ENCODE measurements at regions of chr17 and their contacts with region 1.

Region 1: GRCh38 chr17:82767041-82767754 is 15.3 kb downstream of the TBCD start:
- DNase-seq: peak; percentile 80
- H3K4me3 Mint-ChIP-seq: no peak overlapping the region
- H3K27ac Mint-ChIP-seq: no peak overlapping the region
- H3K4me1 Mint-ChIP-seq: peaks cover 15% of the 10 kb centered on the region
- H3K27me3 Mint-ChIP-seq: no peaks in the 10 kb centered on the region

Region 2: GRCh38 chr17:82636626-82637598 is 130.3 kb before region 1 on chr17:
- intact Hi-C with region 1: no loop called
- DNase-seq: no peak
- H3K4me3 Mint-ChIP-seq: no peak overlapping the region
- H3K27ac Mint-ChIP-seq: peak overlapping the region; percentile 22
- H3K4me1 Mint-ChIP-seq: peaks cover 17% of the 10 kb centered on the region
- H3K27me3 Mint-ChIP-seq: no peaks in the 10 kb centered on the region

Region 3: GRCh38 chr17:82668631-82669099 is 98.5 kb before region 1 on chr17:
- intact Hi-C with region 1: loop called (anchors 1 kb)
- DNase-seq: peak; percentile 80
- H3K4me3 Mint-ChIP-seq: peak overlapping the region; percentile 49
- H3K27ac Mint-ChIP-seq: no peak overlapping the region
- H3K4me1 Mint-ChIP-seq: peaks cover 4% of the 10 kb centered on the region
- H3K27me3 Mint-ChIP-seq: no peaks in the 10 kb centered on the region